ENCODE measurements at regions of chr18 and their contacts with region 1.

Region 1: GRCh38 chr18:24734058-24734457 is 273.6 kb downstream of the HRH4 start:
- DNase-seq: peak in 1 of 5 donors; percentile 29
- ATAC-seq: peak in 2 of 4 donors; percentile 35 to 42
- H3K4me3 ChIP-seq: no peak overlapping the region
- H3K27ac ChIP-seq: no peak overlapping the region
- H3K4me1 ChIP-seq: peaks cover 0 to 9% (median 0%) of the 10 kb centered on the region in 12 donors
- H3K27me3 ChIP-seq: no peaks in the 10 kb centered on the region
- CTCF ChIP-seq: peak in 10 of 12 donors; percentile 12 to 52 (median 28)
- POLR2A ChIP-seq: no peak

Region 2: GRCh38 chr18:24354286-24354685 is 379.8 kb before region 1 on chr18:
- intact Hi-C with region 1: loop called in 1 of 10 experiments (anchors 10 kb)
- DNase-seq: no peak
- ATAC-seq: no peak
- H3K4me3 ChIP-seq: no peak overlapping the region
- H3K27ac ChIP-seq: no peak overlapping the region
- H3K4me1 ChIP-seq: no peaks in the 10 kb centered on the region
- H3K27me3 ChIP-seq: no peaks in the 10 kb centered on the region
- CTCF ChIP-seq: no peak
- POLR2A ChIP-seq: no peak

Region 3: DNA sequence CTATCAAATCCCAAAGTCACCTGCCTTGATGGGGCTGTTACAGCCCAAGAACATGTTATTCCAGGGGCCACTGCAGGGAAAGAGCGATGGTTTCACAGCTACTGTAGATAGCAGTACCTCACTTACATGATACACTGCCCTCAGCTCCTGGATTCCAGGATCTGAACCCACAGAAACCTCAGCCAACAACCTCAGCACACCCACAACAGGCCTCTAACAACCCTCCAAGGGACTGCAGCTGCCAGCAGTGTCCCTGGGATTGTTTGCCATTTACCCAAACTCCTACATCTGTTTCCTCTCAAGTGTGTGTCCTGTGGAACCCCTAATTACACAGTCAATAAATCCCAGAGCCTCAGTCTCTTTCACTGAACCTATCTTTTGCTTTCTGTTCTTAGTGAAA is 364.6 kb before region 1 on chr18:
- intact Hi-C with region 1: loop called in 2 of 10 experiments (anchors 10 kb)
- DNase-seq: no peak
- ATAC-seq: no peak
- H3K4me3 ChIP-seq: no peak overlapping the region
- H3K27ac ChIP-seq: no peak overlapping the region
- H3K4me1 ChIP-seq: no peaks in the 10 kb centered on the region
- H3K27me3 ChIP-seq: no peaks in the 10 kb centered on the region
- CTCF ChIP-seq: no peak
- POLR2A ChIP-seq: no peak

Region 4: GRCh38 chr18:24488824-24489493 is 245.1 kb before region 1 on chr18:
- intact Hi-C with region 1: loop called (anchors 5 to 10 kb)
- DNase-seq: no peak
- ATAC-seq: peak in 1 of 4 donors; percentile 61
- H3K4me3 ChIP-seq: no peak overlapping the region
- H3K27ac ChIP-seq: no peak overlapping the region
- H3K4me1 ChIP-seq: peaks cover 0 to 6% (median 0%) of the 10 kb centered on the region in 12 donors
- H3K27me3 ChIP-seq: no peaks in the 10 kb centered on the region
- CTCF ChIP-seq: peak; percentile 75 to 86 (median 83)
- POLR2A ChIP-seq: no peak

Region 5: DNA sequence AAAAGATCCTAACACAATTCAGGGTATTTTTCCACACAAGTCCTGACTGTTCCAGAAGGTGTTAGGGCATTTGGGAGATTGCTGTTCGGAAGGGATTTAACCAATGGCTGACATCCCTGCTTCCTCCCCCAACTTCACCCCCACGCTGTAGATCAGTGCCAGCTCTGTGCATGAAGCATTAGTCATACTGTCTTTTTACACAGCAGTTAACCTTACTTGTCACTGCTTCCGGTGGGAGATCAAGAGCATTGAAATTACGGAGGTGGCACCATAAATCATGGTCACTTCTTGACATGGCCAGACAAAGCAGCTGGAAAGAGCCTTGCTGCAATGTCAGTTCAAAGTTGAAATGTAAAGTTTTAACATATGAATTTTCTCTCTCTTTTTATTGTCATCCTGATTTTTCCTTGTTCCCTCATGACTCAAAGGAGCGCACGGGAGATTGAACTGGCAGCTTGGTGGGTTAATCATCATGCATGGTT is 203.4 kb before region 1 on chr18:
- intact Hi-C with region 1: no loop called
- DNase-seq: peak in 1 of 5 donors; percentile 32
- ATAC-seq: no peak
- H3K4me3 ChIP-seq: no peak overlapping the region
- H3K27ac ChIP-seq: no peak overlapping the region
- H3K4me1 ChIP-seq: peaks cover 0 to 4% (median 0%) of the 10 kb centered on the region in 12 donors
- H3K27me3 ChIP-seq: peaks cover 0 to 8% (median 0%) of the 10 kb centered on the region in 9 donors
- CTCF ChIP-seq: no peak
- POLR2A ChIP-seq: no peak

Region 6: DNA sequence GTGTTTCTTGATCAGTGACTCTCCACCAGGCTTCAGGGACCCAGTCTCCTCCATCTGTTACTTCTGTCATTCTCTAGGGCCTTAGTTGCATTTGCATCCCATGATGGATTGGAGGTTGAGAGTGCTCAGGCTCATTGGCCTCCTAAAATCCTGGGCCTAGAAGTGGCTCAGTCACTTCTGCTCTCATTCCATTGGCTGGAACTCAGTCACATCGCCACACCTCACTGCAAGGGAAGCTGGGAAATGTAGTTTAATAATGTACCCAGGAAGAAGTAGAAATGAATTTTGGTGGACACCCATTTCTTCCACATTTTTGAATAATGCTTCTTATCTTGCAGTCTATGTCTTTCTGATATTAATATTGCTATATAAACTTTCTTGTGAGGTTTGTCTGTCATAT is 50.1 kb before region 1 on chr18:
- intact Hi-C with region 1: loop called in 2 of 10 experiments (anchors 10 kb)
- DNase-seq: no peak
- ATAC-seq: no peak
- H3K4me3 ChIP-seq: no peak overlapping the region
- H3K27ac ChIP-seq: no peak overlapping the region
- H3K4me1 ChIP-seq: peaks cover 0 to 3% (median 0%) of the 10 kb centered on the region in 12 donors
- H3K27me3 ChIP-seq: no peaks in the 10 kb centered on the region
- CTCF ChIP-seq: no peak
- POLR2A ChIP-seq: no peak

Measured in heart left ventricle (tissue), 16 donors.